ENCODE measurements at regions of chr6 and their contacts with region 1.

Region 1: DNA sequence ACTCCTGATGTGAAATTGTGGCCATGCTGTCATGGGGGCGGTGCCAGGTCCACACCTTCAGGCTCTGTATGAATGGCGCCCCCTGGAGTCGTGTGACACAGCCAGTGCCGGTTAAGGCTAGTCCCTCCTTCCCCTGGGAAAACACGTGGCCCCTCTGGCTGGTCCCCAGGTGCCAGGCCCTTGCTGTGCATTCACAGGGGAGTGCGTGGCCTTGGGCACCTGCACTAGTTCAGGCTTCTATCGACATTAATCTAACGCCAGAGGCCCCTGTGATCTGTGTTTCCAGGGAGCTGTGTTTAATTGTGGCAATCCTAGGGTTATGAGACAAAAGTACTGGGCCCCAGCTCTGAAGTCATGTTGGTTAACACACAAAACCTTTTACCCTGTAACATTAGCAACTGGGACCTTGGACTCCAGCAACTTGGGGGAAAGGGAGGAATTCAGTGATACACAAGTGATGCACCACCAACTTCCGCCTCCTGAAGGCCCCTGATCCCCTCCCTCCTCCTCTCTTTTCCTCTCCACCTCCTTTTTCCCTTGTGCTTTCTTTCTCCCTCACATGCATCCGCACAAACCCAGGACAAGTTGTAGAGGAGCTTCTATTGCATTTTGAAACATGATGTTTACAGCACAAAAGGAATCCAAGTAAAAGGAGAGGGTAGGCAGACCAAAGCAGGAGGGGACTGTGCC is 74.0 kb downstream of the SSR1 start:
- DNase-seq: peak; percentile 87
- ATAC-seq: peak; percentile 94
- H3K4me3 ChIP-seq: no peak overlapping the region
- H3K4me3 Mint-ChIP-seq: no peak overlapping the region
- H3K27ac ChIP-seq: peak overlapping the region in 1 of 2 donors; percentile 17
- H3K27ac Mint-ChIP-seq: peak overlapping the region; percentile 60
- H3K4me1 ChIP-seq: peaks cover 12 to 34% of the 10 kb centered on the region in 2 donors
- H3K4me1 Mint-ChIP-seq: peaks cover 49% of the 10 kb centered on the region
- H3K27me3 ChIP-seq: no peaks in the 10 kb centered on the region
- H3K27me3 Mint-ChIP-seq: no peaks in the 10 kb centered on the region
- CTCF ChIP-seq: peak; percentile 72

Region 2: DNA sequence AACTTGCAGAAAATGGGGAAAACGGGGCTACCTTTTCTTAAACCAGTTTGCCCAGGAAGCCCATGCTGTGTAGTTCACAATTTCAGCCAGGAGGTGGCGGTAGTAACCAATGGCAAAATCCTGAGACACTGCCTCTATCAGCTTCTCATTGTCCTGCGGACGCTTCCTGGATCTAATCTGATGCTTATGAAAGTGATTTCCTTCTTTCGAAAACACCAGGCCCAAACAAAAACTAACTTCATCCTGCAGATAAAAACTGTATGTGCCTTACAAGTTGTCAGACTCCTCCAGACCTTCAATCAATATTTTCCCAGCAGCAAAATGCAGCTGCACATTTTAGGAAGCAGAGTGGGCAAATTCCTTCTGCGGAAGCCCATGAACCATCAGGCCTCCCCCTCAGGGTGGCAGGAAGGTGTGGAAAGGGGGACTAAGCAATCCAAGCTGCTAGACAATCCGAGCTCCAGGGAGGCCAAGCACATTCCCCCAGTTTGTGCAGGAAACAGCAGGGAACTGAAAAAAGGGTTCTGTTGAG is 562.1 kb before region 1 on chr6:
- CTCF ChIA-PET with region 1: interaction called, 59 read pairs
- POLR2A ChIA-PET with region 1: no interaction called
- intact Hi-C with region 1: loop called (anchors 1 kb)
- DNase-seq: peak; percentile 82
- ATAC-seq: peak; percentile 90
- H3K4me3 ChIP-seq: no peak overlapping the region
- H3K4me3 Mint-ChIP-seq: no peak overlapping the region
- H3K27ac ChIP-seq: no peak overlapping the region
- H3K27ac Mint-ChIP-seq: no peak overlapping the region
- H3K4me1 ChIP-seq: peaks cover 5 to 7% of the 10 kb centered on the region in 2 donors
- H3K4me1 Mint-ChIP-seq: peaks cover 9% of the 10 kb centered on the region
- H3K27me3 ChIP-seq: no peaks in the 10 kb centered on the region
- H3K27me3 Mint-ChIP-seq: peaks cover 5% of the 10 kb centered on the region
- CTCF ChIP-seq: peak; percentile 98

Region 3: DNA sequence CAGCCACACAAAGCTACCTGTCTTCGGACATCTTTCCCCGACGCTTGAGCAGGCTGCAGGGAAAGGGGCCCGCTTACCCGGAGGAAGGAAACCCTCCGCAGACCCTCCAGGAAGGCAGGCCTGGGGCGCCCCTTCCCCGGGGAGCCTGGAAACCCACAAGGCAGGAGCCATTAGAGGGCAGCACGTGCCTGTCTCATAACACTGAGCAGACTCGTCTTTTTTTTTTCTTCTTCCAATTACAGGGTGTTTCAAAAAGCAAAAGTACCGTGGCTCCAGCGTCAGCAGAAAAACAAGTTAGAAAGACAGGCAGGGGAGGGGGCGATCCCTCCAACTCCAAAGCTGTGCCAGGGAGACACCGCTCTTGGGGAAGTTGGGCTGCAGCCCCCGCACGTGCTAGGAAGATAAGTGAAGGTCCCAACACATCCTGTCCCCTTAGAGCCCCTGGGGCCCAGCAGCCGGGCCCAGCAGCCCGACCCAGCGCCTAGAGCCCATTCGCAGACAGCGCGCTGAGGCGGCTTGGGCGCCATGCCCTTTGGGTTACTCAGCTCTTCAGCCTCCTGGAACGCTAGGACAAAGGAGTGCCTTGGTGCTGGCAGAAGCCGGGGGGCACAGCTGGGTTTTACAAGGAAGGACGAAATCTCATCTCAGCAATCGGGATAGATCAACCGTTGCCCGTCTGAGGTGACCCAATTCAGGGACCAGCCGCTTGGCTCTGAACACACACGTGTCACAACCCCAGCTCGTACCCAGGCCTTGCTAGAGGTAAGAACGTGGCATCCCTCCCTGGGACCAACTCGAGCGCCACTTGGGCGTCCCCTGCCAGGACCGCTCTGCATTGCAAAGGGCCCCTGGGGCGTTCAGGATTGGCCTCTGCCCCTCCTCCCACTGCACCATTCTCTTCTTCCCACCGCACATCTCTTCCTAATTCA is 514.2 kb before region 1 on chr6:
- CTCF ChIA-PET with region 1: interaction called, 23 read pairs
- POLR2A ChIA-PET with region 1: no interaction called
- intact Hi-C with region 1: loop called (anchors 1 kb)
- DNase-seq: peak; percentile 70
- ATAC-seq: peak; percentile 77
- H3K4me3 ChIP-seq: peak overlapping the region in 4 of 5 experiments; percentile 6 to 56 (median 25)
- H3K4me3 Mint-ChIP-seq: peak overlapping the region; percentile 55
- H3K27ac ChIP-seq: no peak overlapping the region
- H3K27ac Mint-ChIP-seq: no peak overlapping the region
- H3K4me1 ChIP-seq: peaks cover 11 to 18% of the 10 kb centered on the region in 2 donors
- H3K4me1 Mint-ChIP-seq: peaks cover 9% of the 10 kb centered on the region
- H3K27me3 ChIP-seq: peaks cover 0 to 23% (median 12%) of the 10 kb centered on the region in 4 experiments
- H3K27me3 Mint-ChIP-seq: peaks cover 33% of the 10 kb centered on the region
- CTCF ChIP-seq: peak; percentile 67

Region 4: DNA sequence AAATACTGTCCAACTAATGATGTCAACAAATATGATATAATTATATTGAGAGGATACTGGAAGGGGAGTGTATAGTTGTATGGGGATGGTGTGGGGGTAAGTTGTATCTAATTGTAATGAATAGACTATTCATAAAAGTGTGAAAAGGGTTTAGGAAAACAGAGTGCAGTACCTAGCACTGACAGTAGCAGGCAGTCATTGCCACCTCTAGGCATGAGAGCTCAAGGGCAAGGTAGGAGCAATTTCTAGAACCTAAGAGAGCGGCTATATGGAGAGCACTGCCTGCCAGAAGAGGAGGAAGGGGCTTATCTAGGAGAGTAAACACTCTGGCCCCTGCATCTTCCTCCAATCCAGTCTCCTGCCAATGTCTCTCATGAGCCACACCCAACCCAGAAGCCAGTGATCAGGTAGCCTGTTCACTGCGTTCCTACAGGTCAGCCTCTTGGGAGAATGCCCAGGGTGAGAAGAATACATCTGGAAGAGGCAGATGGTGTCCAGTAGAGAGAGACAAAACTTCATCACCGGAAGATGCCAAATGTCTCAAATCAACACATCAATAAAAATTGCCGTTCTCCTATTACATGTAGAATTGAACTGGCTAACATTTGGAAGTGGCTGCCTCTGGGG is 450.5 kb before region 1 on chr6:
- CTCF ChIA-PET with region 1: interaction called, 9 read pairs
- POLR2A ChIA-PET with region 1: no interaction called
- intact Hi-C with region 1: loop called (anchors 2 kb)
- DNase-seq: peak; percentile 46
- ATAC-seq: peak; percentile 69
- H3K4me3 ChIP-seq: no peak overlapping the region
- H3K4me3 Mint-ChIP-seq: no peak overlapping the region
- H3K27ac ChIP-seq: no peak overlapping the region
- H3K27ac Mint-ChIP-seq: no peak overlapping the region
- H3K4me1 ChIP-seq: no peaks in the 10 kb centered on the region
- H3K4me1 Mint-ChIP-seq: peaks cover under 1% of the 10 kb centered on the region
- H3K27me3 ChIP-seq: no peaks in the 10 kb centered on the region
- H3K27me3 Mint-ChIP-seq: no peaks in the 10 kb centered on the region
- CTCF ChIP-seq: peak; percentile 76

Region 5: GRCh38 chr6:7073821-7074525 is 165.1 kb before region 1 on chr6:
- CTCF ChIA-PET with region 1: interaction called, 6 read pairs
- POLR2A ChIA-PET with region 1: no interaction called
- intact Hi-C with region 1: loop called (anchors 10 kb)
- DNase-seq: peak; percentile 88
- ATAC-seq: peak; percentile 100
- H3K4me3 ChIP-seq: peak overlapping the region in 3 of 5 experiments; percentile 21 to 47 (median 37)
- H3K4me3 Mint-ChIP-seq: peak overlapping the region; percentile 72
- H3K27ac ChIP-seq: peak overlapping the region; percentile 43 to 75
- H3K27ac Mint-ChIP-seq: peak overlapping the region; percentile 79
- H3K4me1 ChIP-seq: peaks cover 6 to 17% of the 10 kb centered on the region in 2 donors
- H3K4me1 Mint-ChIP-seq: peaks cover 10% of the 10 kb centered on the region
- H3K27me3 ChIP-seq: no peaks in the 10 kb centered on the region
- H3K27me3 Mint-ChIP-seq: no peaks in the 10 kb centered on the region
- CTCF ChIP-seq: no peak

Region 6: DNA sequence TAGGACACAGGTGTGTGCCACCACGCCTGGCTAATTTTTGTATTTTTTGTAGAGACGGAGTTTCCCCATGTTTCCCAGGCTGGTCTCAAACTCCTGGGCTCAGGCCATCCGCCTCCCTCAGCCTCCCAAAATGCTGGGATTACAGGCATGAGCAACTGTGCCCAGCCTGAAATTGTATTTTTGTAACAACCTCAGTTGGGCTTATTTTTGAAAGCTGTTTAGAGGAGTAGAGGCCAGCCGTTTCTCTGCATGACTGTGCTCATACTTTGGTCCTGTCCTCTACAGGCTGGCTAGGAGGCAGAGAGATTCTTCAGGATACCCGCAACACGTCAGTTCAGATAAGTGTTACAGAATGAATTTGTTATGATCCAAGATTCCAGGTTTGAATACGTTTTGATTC is 128.4 kb after region 1 on chr6:
- CTCF ChIA-PET with region 1: no interaction called
- POLR2A ChIA-PET with region 1: no interaction called
- intact Hi-C with region 1: no loop called
- DNase-seq: no peak
- ATAC-seq: no peak
- H3K4me3 ChIP-seq: no peak overlapping the region
- H3K4me3 Mint-ChIP-seq: no peak overlapping the region
- H3K27ac ChIP-seq: no peak overlapping the region
- H3K27ac Mint-ChIP-seq: no peak overlapping the region
- H3K4me1 ChIP-seq: no peaks in the 10 kb centered on the region
- H3K4me1 Mint-ChIP-seq: no peaks in the 10 kb centered on the region
- H3K27me3 ChIP-seq: no peaks in the 10 kb centered on the region
- H3K27me3 Mint-ChIP-seq: peaks cover 8% of the 10 kb centered on the region
- CTCF ChIP-seq: no peak

Measured in B cell (primary cell).